ENCODE measurements at regions of chr1 and their contacts with region 1.

Region 1: GRCh38 chr1:35029761-35030160 is 2.0 kb downstream of the ZMYM6 start:
- DNase-seq: no peak
- ATAC-seq: no peak
- H3K4me3 ChIP-seq: peak overlapping the region in 1 of 2 experiments; percentile 91; a peak in 1 of 4 replicates
- H3K27ac ChIP-seq: no peak overlapping the region
- H3K4me1 ChIP-seq: peaks cover 13% of the 10 kb centered on the region
- H3K27me3 ChIP-seq: no peaks in the 10 kb centered on the region
- CTCF ChIP-seq: no peak

Region 2: GRCh38 chr1:34908369-34908768 is 121.4 kb before region 1 on chr1:
- CTCF ChIA-PET with region 1: no interaction called
- POLR2A ChIA-PET with region 1: interaction called, 17 read pairs
- in situ Hi-C with region 1: no loop called
- intact Hi-C with region 1: no loop called
- DNase-seq: no peak
- ATAC-seq: no peak
- H3K4me3 ChIP-seq: no peak overlapping the region
- H3K27ac ChIP-seq: no peak overlapping the region
- H3K4me1 ChIP-seq: no peaks in the 10 kb centered on the region; the same call in 1 of the 2 replicates
- H3K27me3 ChIP-seq: peaks cover 2% of the 10 kb centered on the region
- CTCF ChIP-seq: no peak

Region 3: GRCh38 chr1:35835398-35835797 is 805.6 kb after region 1 on chr1:
- CTCF ChIA-PET with region 1: no interaction called
- POLR2A ChIA-PET with region 1: no interaction called
- in situ Hi-C with region 1: no loop called
- intact Hi-C with region 1: no loop called
- DNase-seq: no peak
- ATAC-seq: no peak
- H3K4me3 ChIP-seq: no peak overlapping the region
- H3K27ac ChIP-seq: no peak overlapping the region
- H3K4me1 ChIP-seq: no peaks in the 10 kb centered on the region
- H3K27me3 ChIP-seq: no peaks in the 10 kb centered on the region
- CTCF ChIP-seq: no peak